Activated T-helper 1 cell treated with anti-CD3 and anti-CD28 coated beads, Interleukin-12 subunit alpha, Interleukin-12 subunit beta, Interleukin-2, Interleukin-4 antibody, amounts not matched to agents 30 ng/mL and 10 ng/mL and 1 ng/mL, durations not matched to agents 14 hours and 24 hours and 36 hours (primary cell): ENCODE measurements at regions of chr3 and their contacts with region 1.

Region 1: DNA sequence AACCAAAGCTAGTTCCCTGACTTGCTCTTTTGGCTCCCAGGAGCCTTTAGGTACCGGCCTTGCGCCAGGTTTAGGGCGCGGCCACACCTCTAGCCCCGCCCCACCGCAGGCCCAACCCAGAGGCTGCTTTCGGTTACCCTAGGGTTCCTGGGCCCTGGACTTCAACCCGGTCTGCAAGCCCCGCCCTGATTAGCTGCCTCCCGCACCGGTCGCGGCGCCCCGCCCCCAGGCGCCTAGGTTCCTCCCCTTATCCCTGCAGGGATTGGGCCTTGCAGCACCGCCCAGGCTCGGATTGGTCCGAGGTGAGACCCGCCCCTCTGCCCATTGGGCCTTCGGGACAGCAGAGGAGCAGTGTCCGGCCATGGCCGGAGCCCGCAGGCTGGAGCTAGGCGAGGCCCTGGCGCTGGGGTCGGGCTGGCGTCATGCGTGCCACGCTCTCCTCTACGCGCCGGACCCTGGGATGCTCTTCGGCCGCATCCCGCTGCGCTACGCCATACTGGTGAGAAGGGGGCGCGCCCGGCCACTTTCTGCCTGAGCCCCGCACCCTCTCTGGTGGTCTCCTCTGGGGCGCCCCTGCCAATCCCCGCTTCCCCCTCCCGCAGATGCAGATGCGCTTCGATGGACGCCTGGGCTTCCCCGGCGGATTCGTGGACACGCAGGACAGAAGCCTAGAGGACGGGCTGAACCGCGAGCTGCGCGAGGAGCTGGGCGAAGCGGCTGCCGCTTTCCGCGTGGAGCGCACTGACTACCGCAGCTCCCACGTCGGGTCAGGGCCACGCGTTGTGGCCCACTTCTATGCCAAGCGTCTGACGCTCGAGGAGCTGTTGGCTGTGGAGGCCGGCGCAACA is at the start of gene NUDT16:
- DNase-seq: peak; percentile 98
- H3K4me3 Mint-ChIP-seq: peak within 1 kb of the TSS; percentile 92
- H3K27ac Mint-ChIP-seq: peak within 1 kb of the TSS; percentile 90
- H3K4me1 Mint-ChIP-seq: peaks cover 52% of the 10 kb centered on the region
- H3K27me3 Mint-ChIP-seq: no peaks in the 10 kb centered on the region
- total RNA-seq, gene NUDT16: 10.6 and 11.5 TPM in 2 replicates

Region 2: DNA sequence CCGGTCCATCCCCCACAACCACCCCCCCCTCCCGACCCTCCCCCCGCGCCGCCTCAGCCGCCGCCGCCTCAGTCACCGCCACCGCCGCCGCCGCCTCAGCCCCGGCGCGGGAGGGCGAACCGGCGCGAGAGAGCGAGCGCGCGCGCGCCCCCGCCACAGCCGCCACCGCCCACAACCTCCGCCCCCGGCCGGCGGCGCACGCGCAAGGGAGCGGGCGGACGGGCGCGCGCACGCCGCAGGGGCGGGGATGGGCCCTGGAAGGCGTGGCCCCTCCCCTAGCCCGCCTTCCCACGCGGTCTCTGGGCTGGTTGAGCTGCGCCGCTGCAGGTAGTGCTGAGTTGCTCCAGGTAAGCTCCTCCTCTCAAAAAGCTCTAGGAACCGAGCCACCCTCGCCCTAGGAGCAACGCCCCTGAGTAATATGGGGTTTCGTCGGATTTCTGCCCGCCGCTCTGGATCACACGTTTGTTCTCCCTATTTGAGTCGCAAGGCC is 1488.0 kb before region 1 on chr3 and contains the start of gene TMCC1:
- intact Hi-C with region 1: loop called (anchors 10 kb)
- DNase-seq: peak; percentile 83
- H3K4me3 Mint-ChIP-seq: peak within 1 kb of the TSS; percentile 91
- H3K27ac Mint-ChIP-seq: peak within 1 kb of the TSS; percentile 89
- H3K4me1 Mint-ChIP-seq: peaks cover 47% of the 10 kb centered on the region
- H3K27me3 Mint-ChIP-seq: no peaks in the 10 kb centered on the region
- total RNA-seq, gene TMCC1: 17.1 and 22.4 TPM in 2 replicates

Region 3: DNA sequence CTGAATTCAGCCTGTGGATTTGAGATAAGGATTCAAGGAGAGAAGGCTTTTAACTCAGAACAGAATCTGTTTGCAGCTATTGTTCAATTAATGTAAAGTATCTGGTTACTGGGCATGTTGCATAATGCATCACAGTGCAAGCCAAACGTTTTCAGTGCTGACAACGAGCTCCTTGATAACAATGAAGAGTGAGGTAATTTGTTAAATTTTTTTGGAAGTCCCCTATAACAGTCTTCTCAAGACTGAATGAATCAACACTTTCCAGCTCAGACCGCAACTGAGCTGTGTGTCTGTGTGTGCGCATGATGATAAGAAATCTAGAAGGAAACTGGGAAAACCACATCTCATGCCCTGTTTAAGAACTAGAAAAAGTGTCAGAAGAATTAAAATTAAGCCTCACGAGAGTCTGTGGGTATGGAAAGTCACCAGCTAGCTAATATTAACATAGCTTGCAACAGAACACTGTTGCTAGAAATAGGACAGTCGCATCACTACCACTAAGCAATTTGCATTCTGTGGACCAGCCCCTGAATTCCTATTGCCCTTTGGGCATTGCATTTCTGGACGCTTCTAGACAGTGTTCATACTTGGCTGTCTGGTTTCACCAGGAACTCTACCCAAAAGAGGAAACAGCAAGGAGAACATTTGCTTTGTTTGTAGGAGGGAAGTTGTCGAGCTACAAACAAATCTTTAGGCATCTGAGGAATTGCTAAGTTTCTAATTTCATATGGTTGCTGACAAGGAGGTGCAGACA is 531.4 kb before region 1 on chr3:
- intact Hi-C with region 1: loop called (anchors 1 kb)
- DNase-seq: peak; percentile 61
- H3K4me3 Mint-ChIP-seq: peak overlapping the region; percentile 1
- H3K27ac Mint-ChIP-seq: peak overlapping the region; percentile 71
- H3K4me1 Mint-ChIP-seq: peaks cover 41% of the 10 kb centered on the region
- H3K27me3 Mint-ChIP-seq: peaks cover 26% of the 10 kb centered on the region

Region 4: GRCh38 chr3:131026321-131027178 is 355.1 kb before region 1 on chr3 and contains the starts of genes ASTE1 and NEK11:
- intact Hi-C with region 1: loop called (anchors 2 kb)
- DNase-seq: peak; percentile 88
- H3K4me3 Mint-ChIP-seq: peak within 1 kb of the TSS; percentile 91
- H3K27ac Mint-ChIP-seq: peak within 1 kb of the TSS; percentile 94
- H3K4me1 Mint-ChIP-seq: peaks cover 47% of the 10 kb centered on the region
- H3K27me3 Mint-ChIP-seq: no peaks in the 10 kb centered on the region
- total RNA-seq, gene ASTE1: 9.6 and 14.6 TPM in 2 replicates
- total RNA-seq, gene NEK11: 0.51 and 1.2 TPM in 2 replicates

Region 5: GRCh38 chr3:131502530-131503245 is 121.0 kb after region 1 on chr3 and contains the start of gene MRPL3:
- intact Hi-C with region 1: loop called (anchors 1 kb)
- DNase-seq: peak; percentile 78
- H3K4me3 Mint-ChIP-seq: peak within 1 kb of the TSS; percentile 100
- H3K27ac Mint-ChIP-seq: peak within 1 kb of the TSS; percentile 95
- H3K4me1 Mint-ChIP-seq: peaks cover 50% of the 10 kb centered on the region
- H3K27me3 Mint-ChIP-seq: peaks cover 4% of the 10 kb centered on the region
- total RNA-seq, gene MRPL3: 166 and 175 TPM in 2 replicates